Activated CD4-positive, alpha-beta memory T cell treated with anti-CD3 and anti-CD28 coated beads for 36 hours (primary cell): ENCODE measurements at regions of chr7 and their contacts with region 1.

Region 1: DNA sequence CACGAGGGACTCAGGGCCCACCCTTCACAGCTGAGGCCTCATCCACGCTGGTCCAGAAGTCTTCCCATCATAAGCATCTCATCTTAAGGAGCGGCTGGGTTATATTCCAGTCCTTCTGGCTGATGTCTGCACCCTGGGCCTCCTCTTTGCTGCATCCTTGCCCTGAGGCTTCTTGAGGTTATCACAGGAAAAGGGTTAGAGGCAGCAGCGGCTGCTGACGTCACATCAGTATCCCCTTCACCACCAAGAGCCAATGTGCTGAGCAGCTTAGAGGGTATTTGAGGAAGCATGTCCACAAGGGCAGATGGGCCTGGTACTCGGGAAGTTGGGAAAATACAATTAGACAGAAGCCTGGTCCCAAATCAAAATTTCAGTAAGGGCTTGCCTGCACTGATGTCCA is 125.1 kb downstream of the PLXNA4 start:
- DNase-seq: no peak
- H3K4me3 Mint-ChIP-seq: no peak overlapping the region
- H3K27ac Mint-ChIP-seq: no peak overlapping the region
- H3K4me1 Mint-ChIP-seq: peaks cover 48% of the 10 kb centered on the region
- H3K27me3 Mint-ChIP-seq: no peaks in the 10 kb centered on the region

Region 2: DNA sequence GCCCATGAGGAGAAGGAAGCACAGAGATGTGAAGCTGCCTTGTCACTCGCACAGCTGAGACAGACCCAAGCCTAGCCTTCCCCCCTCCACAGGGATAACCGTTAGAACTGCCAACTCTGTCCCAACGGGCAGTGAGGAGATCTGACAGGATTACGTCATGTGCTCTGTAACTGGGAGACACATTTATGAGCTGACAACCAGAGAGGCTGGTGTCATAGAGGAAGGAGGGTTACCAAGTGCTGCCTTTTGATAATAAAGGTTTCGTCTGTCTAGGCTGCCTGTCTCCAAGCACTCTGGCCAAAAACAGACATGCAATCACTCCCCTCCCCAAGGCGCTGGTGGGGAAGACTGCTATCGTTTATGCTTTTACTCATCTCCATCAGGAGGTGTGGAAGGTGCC is 40.8 kb before region 1 on chr7:
- CTCF ChIA-PET with region 1: no interaction called
- POLR2A ChIA-PET with region 1: no interaction called
- intact Hi-C with region 1: no loop called
- DNase-seq: no peak
- H3K4me3 Mint-ChIP-seq: no peak overlapping the region
- H3K27ac Mint-ChIP-seq: no peak overlapping the region
- H3K4me1 Mint-ChIP-seq: peaks cover 4% of the 10 kb centered on the region
- H3K27me3 Mint-ChIP-seq: no peaks in the 10 kb centered on the region

Region 3: DNA sequence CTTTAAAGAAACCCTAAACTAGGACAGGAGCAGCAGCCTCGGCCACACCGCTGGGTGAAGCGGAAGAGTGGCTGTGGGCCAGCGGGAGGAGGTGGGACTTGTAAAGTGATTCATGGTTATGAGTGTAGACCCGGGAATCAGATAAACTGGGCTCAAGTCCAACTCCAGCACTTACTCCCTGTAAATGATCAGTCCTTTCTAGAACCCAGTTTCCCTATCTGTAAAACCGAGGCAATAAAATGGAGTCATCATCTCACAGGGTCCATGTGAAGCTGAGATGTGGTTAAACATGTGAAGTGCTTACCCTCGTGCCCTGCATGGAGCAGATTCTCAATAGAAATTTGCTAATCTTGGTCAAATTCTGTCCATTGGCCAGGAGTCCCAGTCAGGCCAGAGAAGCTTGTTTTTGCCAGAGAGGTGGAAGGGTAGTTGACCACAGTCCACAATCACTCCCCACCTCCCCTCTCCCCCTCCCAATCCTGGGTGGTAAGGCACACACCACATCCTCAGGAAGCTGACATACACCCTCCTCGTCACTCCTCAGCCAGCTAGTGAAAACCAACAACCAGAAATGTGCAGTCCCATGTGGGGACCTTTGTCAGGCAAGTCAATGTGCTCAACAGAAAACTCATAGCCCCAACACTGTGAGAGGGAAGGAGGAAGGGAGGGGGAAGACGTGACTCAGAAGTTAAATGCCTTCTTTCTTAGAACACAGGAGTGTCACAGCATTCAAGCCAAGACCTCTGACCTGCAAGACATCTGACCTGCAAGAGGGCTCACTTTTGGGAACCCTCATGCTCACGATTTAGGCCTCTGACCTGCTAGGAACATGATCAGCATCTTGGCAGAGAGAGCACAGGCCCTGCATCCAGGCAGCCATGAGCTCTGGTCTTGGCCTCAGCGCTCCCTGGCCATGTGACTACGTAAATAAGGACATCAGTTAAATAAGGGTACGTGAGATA is 20.0 kb before region 1 on chr7:
- CTCF ChIA-PET with region 1: no interaction called
- POLR2A ChIA-PET with region 1: interaction called, 3 read pairs
- intact Hi-C with region 1: loop called (anchors 2 kb)
- DNase-seq: peak; percentile 73
- H3K4me3 Mint-ChIP-seq: no peak overlapping the region
- H3K27ac Mint-ChIP-seq: peak overlapping the region; percentile 74
- H3K4me1 Mint-ChIP-seq: peaks cover 61% of the 10 kb centered on the region
- H3K27me3 Mint-ChIP-seq: peaks cover 3% of the 10 kb centered on the region

Region 4: DNA sequence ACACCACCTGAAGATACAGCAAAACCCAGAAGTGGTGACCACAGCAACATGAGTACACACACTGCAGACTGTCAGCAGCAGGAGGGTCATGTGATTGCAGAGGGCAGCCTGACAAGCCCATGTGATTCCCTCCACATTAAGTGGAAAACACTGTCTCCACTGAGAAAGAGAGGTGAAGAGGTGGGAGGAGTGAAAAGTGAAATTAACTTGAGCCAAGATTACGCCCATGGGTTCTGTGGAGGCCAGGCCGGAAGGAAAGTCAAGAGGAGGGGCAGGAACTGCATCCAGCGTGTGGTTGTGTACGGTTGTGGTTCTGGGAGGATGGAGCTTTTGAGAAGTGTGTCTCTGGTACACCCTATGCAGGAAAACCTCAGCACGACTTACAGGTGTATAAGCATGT is 13.4 kb before region 1 on chr7:
- CTCF ChIA-PET with region 1: interaction called, 6 read pairs
- POLR2A ChIA-PET with region 1: interaction called, 8 read pairs
- intact Hi-C with region 1: loop called (anchors 1 kb)
- DNase-seq: peak; percentile 56
- H3K4me3 Mint-ChIP-seq: peak overlapping the region; percentile 33
- H3K27ac Mint-ChIP-seq: peak overlapping the region; percentile 54
- H3K4me1 Mint-ChIP-seq: peaks cover 68% of the 10 kb centered on the region
- H3K27me3 Mint-ChIP-seq: peaks cover 3% of the 10 kb centered on the region

Region 5: DNA sequence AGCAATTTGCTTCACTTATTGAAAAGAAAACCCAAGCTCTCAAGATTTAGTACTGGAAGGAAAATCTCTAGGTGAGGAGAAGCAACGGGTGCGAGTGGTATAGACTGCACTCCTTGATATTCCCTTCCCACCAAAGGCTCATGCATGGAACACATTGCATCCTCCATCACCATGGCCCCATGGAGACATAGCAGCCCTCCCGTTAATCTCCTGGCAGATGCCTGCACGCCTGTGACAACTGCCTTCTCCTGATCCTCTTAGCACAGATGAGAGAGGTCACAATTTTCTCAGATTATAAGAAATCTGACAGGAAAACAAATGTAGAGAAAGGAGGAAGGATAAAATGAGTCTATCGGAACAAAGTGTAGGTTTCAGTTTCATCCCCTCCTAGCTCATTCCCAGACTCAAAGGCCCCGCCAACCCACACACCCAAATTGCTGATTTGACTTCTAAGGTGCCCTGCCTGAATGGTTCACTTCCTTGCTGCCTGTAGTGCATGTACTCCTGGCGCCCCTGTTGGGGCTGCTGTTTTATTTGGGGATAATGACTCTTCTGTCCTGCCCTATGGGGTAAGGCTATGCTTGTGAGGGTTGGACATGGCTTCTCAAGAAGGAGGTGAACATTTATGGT is 75.1 kb after region 1 on chr7:
- CTCF ChIA-PET with region 1: no interaction called
- POLR2A ChIA-PET with region 1: no interaction called
- intact Hi-C with region 1: loop called (anchors 2 kb)
- DNase-seq: peak; percentile 71
- H3K4me3 Mint-ChIP-seq: no peak overlapping the region
- H3K27ac Mint-ChIP-seq: peak overlapping the region; percentile 29
- H3K4me1 Mint-ChIP-seq: peaks cover 25% of the 10 kb centered on the region
- H3K27me3 Mint-ChIP-seq: peaks cover 7% of the 10 kb centered on the region

Region 6: DNA sequence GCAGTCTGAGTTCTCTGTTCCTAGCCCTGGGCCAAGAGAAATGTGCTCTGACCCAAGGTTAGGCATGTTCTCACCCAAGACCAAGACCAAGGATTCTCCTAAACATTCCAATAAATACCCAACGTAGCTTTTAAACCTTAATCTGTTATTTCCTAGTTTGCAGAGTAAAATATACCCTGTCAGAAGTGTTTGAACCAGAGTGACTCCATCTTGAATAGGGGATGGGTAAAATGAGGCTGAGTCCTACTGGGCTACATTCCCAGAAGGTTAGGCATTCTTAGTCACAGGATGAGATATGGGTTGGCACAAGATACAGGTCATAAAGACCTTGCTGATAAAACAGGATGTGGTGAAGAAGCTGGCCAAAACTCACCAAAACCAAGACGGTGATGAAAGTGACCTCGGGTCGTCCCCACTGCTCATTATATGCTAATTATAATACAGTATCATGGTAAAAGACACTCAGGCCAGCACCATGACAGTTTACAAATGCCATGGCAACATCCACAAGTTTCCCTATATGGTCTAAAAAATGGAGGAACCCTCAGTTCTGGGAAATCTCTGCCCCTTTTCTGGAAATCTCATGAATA is 97.4 kb after region 1 on chr7:
- CTCF ChIA-PET with region 1: no interaction called
- POLR2A ChIA-PET with region 1: no interaction called
- intact Hi-C with region 1: loop called (anchors 1 kb)
- DNase-seq: peak; percentile 66
- H3K4me3 Mint-ChIP-seq: no peak overlapping the region
- H3K27ac Mint-ChIP-seq: no peak overlapping the region
- H3K4me1 Mint-ChIP-seq: peaks cover 3% of the 10 kb centered on the region
- H3K27me3 Mint-ChIP-seq: peaks cover 7% of the 10 kb centered on the region